ENCODE measurements at regions of chr7 and their contacts with region 1.

Region 1: DNA sequence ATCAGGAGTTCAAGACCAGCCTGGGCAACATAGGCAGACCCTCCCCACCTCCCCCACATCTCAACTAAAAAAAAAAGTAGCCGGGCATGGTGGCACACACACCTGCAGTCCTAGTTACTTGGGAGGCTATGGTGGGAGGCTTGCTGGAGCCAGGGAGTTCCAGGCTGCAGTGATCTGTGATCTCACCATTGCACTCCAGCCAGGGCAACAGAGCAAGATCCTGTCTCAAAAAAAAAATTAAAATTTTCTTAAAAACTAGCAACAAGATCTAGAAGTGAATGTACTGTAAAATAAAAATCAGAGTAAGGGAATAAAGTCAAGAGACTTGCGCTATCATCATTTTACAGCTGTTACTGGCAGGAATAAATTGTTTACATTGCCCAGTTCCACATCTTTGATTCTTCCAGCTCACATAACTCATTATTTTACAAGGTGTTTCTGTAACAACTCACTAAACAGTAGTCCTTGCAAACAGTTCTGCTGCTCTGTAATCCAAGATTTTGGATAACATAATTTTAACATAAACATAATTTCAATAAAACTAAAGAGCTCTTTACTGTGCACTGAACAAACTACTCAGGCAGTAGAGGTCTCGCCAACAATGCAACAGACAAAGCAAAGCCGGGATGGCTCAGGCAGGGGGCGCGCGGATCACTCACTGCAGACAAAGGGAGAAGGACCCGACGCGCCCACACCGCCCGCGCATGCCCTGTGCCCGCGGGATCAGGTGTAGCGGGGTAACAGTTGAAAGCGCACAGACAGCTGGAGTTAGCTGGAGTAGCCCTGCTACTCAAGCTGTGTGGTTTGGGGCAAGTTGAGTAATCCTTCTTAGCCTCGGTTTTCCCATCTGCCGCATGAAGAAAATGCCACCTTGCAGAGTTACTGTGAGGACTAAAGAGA is 73.3 kb upstream of the NFE2L3 start:
- DNase-seq: peak; percentile 35 to 55
- ATAC-seq: peak in 7 of 8 donors; percentile 65 to 83 (median 79)
- H3K4me3 ChIP-seq: no peak overlapping the region
- H3K27ac ChIP-seq: no peak overlapping the region
- H3K4me1 ChIP-seq: peaks cover 0 to 7% (median 0%) of the 10 kb centered on the region in 9 donors
- H3K27me3 ChIP-seq: peaks cover 0 to 93% (median 82%) of the 10 kb centered on the region in 7 donors
- CTCF ChIP-seq: peak in 7 of 9 donors; percentile 29 to 54 (median 40)

Region 2: GRCh38 chr7:26090927-26091519 is 12.3 kb after region 1 on chr7:
- intact Hi-C with region 1: no loop called
- DNase-seq: no peak
- ATAC-seq: peak in 2 of 8 donors; percentile 57 to 69
- H3K4me3 ChIP-seq: peak overlapping the region in 1 of 10 donors; percentile 13
- H3K27ac ChIP-seq: no peak overlapping the region
- H3K4me1 ChIP-seq: peaks cover 0 to 9% (median 0%) of the 10 kb centered on the region in 9 donors
- H3K27me3 ChIP-seq: peaks cover 0 to 12% (median 0%) of the 10 kb centered on the region in 7 donors
- CTCF ChIP-seq: peak; percentile 45 to 79 (median 68)

Region 3: DNA sequence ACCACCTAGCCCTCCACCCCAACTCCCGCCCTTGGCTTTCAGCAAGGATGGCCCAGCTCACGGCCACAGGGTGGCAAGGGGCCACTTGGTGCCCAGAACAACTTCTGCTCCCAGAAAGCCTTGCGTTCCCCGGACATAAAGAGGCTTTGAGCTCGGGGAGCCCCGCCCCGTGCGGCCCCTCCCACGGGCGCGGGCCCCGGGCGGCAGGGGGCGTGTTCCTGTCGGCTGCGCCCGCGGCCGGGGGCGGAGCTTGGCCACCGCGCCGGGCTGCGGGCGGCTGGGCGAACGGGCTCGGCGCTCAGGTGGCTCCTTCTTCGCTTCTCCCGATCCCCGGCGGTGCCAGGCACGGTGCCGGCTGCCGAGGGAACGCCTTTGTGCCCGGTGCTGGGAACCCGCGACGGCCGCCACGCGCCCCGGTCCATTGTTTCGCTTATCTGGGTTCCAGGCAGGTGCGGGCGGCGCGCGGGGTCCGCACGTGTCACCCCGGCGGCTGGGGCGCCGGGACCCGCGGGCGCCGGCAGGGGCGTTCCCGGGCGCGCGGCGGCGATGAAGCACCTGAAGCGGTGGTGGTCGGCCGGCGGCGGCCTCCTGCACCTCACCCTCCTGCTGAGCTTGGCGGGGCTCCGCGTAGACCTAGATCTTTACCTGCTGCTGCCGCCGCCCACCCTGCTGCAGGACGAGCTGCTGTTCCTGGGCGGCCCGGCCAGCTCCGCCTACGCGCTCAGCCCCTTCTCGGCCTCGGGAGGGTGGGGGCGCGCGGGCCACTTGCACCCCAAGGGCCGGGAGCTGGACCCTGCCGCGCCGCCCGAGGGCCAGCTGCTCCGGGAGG is 73.5 kb after region 1 on chr7 and contains the start of gene NFE2L3:
- intact Hi-C with region 1: loop called in 1 of 10 experiments (anchors 10 kb)
- DNase-seq: peak; percentile 36 to 75
- ATAC-seq: peak; percentile 74 to 93 (median 82)
- H3K4me3 ChIP-seq: peak within 1 kb of the TSS; percentile 19 to 69 (median 56)
- H3K27ac ChIP-seq: peak within 1 kb of the TSS in 1 of 10 donors; percentile 66
- H3K4me1 ChIP-seq: peaks cover 0 to 52% (median 13%) of the 10 kb centered on the region in 9 donors
- H3K27me3 ChIP-seq: peaks cover 7 to 58% (median 37%) of the 10 kb centered on the region in 7 donors
- CTCF ChIP-seq: peak in 6 of 9 donors; percentile 21 to 36 (median 24)
- total RNA-seq, gene NFE2L3: 0.32 to 4.1 (median 1.1) TPM

Region 4: GRCh38 chr7:26278770-26279169 is 200.1 kb after region 1 on chr7:
- intact Hi-C with region 1: loop called in 1 of 10 experiments (anchors 10 kb)
- DNase-seq: no peak
- ATAC-seq: no peak
- H3K4me3 ChIP-seq: no peak overlapping the region
- H3K27ac ChIP-seq: no peak overlapping the region
- H3K4me1 ChIP-seq: peaks cover 0 to 10% (median 0%) of the 10 kb centered on the region in 9 donors
- H3K27me3 ChIP-seq: no peaks in the 10 kb centered on the region
- CTCF ChIP-seq: peak in 3 of 9 donors; percentile 20 to 48 (median 37)

Region 5: DNA sequence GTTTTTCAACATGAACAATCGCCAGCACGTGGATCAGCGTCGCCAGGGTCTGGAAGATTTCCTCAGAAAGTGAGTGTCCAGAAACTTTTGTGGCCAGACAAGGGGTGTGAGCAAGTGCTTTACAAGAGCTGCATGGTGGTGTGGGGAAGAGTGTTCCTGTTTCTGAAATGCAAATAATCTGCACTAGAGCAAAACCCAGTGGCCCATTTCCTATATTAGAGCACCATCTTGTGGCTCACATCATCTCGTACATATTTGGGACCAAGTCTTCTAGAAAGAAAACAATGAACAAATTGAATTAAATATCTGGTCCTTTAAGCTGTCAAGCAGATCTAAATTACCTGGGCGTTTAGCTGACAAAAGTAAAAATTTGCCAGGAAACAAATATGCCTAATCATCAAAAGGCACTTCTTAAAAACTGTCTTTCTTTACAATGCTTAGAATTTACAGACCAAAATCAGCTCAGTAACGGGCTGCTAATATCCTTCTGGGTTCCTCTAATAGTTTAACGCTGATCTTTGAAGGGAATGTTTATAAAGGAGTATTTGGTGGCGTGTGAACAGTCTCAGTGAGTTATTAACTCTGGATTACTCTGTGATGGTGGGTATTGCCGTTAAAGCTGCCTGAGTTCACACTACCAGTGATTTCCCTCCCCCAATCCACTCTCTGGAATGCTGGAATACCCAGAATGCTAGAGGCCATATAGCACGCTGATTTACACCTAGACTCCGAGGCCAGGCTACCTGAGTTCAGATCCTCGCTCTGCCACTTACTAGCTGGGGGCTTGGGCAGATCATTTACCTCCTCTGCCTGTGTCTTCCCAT is 286.6 kb after region 1 on chr7:
- intact Hi-C with region 1: loop called in 1 of 10 experiments (anchors 5 kb)
- DNase-seq: peak in 1 of 2 donors; percentile 57
- ATAC-seq: peak; percentile 65 to 89 (median 80)
- H3K4me3 ChIP-seq: no peak overlapping the region
- H3K27ac ChIP-seq: no peak overlapping the region
- H3K4me1 ChIP-seq: peaks cover 0 to 26% (median 0%) of the 10 kb centered on the region in 9 donors
- H3K27me3 ChIP-seq: peaks cover 0 to 62% (median 40%) of the 10 kb centered on the region in 7 donors
- CTCF ChIP-seq: peak; percentile 53 to 87 (median 77)

Region 6: DNA sequence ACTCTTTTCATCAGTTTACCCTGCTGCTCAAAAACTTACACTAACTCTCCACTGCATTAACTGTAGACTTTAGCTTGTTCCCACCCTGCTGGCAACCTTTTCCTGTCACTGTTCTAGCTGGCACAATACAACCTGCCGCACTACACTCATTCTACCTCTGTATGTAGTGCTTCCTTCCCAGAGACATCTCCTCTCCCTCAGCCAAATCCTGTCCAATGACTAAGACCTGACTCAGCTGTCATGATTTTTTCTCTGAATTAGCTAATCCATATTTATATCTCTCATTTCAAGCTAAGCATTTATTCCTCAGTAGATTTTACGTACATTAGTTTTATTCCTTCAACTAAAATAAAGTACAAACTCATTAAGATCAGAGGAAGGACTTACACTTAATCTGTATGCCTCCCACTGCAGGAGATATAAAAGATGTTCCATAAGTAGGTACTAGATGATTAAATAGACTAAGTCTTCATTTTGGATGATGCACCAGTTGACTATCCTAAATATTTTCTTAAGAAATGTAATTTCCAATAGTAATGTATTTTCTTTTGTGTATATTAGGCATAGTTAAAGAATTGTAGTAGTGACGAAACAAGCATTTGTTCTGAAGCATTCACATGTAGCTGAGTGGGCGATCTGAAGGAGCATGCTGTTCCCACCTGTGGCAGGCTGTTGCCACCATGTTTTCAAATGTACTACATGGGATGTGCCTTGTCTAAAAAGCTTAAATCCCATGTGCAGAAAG is 596.6 kb after region 1 on chr7:
- intact Hi-C with region 1: loop called in 2 of 10 experiments (anchors 10 kb)
- DNase-seq: no peak
- ATAC-seq: no peak
- H3K4me3 ChIP-seq: no peak overlapping the region
- H3K27ac ChIP-seq: no peak overlapping the region
- H3K4me1 ChIP-seq: no peaks in the 10 kb centered on the region
- H3K27me3 ChIP-seq: peaks cover 0 to 49% (median 18%) of the 10 kb centered on the region in 7 donors
- CTCF ChIP-seq: no peak

Measured in heart right ventricle (tissue), 16 donors.